T-cell (primary cell): ENCODE measurements at regions of chr7 and their contacts with region 1.

Region 1: GRCh38 chr7:23105644-23106056 is at the start of gene KLHL7:
- DNase-seq: peak; percentile 88 to 97 (median 95)
- ATAC-seq: peak; percentile 93 to 97 (median 96)
- H3K4me3 ChIP-seq: peak within 1 kb of the TSS; percentile 87 to 90
- H3K4me3 Mint-ChIP-seq: peak within 1 kb of the TSS; percentile 97 to 99 (median 97)
- H3K27ac ChIP-seq: peak within 1 kb of the TSS; percentile 89
- H3K27ac Mint-ChIP-seq: peak within 1 kb of the TSS; percentile 92 to 94
- H3K4me1 ChIP-seq: peaks cover 13 to 20% of the 10 kb centered on the region in 2 experiments
- H3K4me1 Mint-ChIP-seq: peaks cover 45 to 48% (median 47%) of the 10 kb centered on the region in 3 donors
- H3K27me3 ChIP-seq: no peaks in the 10 kb centered on the region
- H3K27me3 Mint-ChIP-seq: no peaks in the 10 kb centered on the region
- total RNA-seq, gene KLHL7: 20.1 to 26.8 (median 22.4) TPM

Region 2: DNA sequence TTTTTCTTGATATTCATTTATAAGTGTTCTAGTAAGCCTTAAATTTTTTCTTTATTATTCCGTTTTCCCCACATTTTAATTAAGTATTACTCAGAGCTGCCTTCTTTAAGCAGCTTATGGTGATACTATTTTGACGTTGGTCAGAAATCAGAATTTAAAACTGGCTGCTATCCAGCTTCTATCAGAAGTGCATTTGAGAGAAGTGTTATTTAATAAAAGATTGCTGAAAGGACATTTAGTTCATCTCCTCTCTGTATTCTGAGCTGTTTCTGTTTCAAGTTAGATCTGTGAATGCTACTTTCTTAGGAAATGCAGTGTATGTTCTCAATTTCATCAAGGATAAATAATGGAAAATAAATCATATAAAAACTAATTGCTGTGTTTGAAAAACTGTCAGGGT is 17.4 kb after region 1 on chr7:
- CTCF ChIA-PET with region 1: no interaction called
- POLR2A ChIA-PET with region 1: interaction called in 1 of 2 experiments, 14 read pairs
- DNase-seq: no peak
- ATAC-seq: no peak
- H3K4me3 ChIP-seq: no peak overlapping the region
- H3K4me3 Mint-ChIP-seq: no peak overlapping the region
- H3K27ac ChIP-seq: no peak overlapping the region
- H3K27ac Mint-ChIP-seq: no peak overlapping the region
- H3K4me1 ChIP-seq: no peaks in the 10 kb centered on the region
- H3K4me1 Mint-ChIP-seq: peaks cover 0 to 6% (median 2%) of the 10 kb centered on the region in 3 donors
- H3K27me3 ChIP-seq: no peaks in the 10 kb centered on the region
- H3K27me3 Mint-ChIP-seq: no peaks in the 10 kb centered on the region

Region 3: DNA sequence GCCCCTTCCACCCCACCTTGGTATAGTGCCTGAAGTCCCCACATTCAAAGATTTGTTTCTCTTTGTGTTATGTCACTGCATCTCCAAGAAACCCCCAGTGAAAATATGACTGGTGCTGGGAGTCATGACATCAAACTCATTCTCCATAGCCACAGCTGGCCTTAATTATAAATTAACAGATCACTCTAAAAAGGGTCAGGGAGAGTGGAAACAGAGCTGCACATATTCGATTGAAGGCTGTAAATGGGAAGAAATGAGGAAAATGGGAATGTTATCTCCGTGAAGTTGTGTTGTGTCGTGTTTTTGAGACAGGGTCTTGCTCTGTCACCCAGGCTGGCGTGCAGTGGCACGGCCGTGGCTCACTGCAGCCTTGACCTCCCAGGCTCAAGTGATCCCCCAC is 52.0 kb after region 1 on chr7:
- CTCF ChIA-PET with region 1: no interaction called
- POLR2A ChIA-PET with region 1: no interaction called
- DNase-seq: no peak
- ATAC-seq: no peak
- H3K4me3 ChIP-seq: no peak overlapping the region
- H3K4me3 Mint-ChIP-seq: no peak overlapping the region
- H3K27ac ChIP-seq: no peak overlapping the region
- H3K27ac Mint-ChIP-seq: no peak overlapping the region
- H3K4me1 ChIP-seq: no peaks in the 10 kb centered on the region
- H3K4me1 Mint-ChIP-seq: no peaks in the 10 kb centered on the region
- H3K27me3 ChIP-seq: no peaks in the 10 kb centered on the region
- H3K27me3 Mint-ChIP-seq: no peaks in the 10 kb centered on the region

Region 4: GRCh38 chr7:23181684-23182553 is 76.3 kb after region 1 on chr7 and contains the start of gene NUP42:
- CTCF ChIA-PET with region 1: interaction called in 1 of 2 experiments, 11 read pairs
- POLR2A ChIA-PET with region 1: interaction called, 5 read pairs
- DNase-seq: peak; percentile 87 to 97 (median 92)
- ATAC-seq: peak; percentile 94 to 97 (median 96)
- H3K4me3 ChIP-seq: peak within 1 kb of the TSS; percentile 72 to 74
- H3K4me3 Mint-ChIP-seq: peak within 1 kb of the TSS; percentile 93 to 98 (median 95)
- H3K27ac ChIP-seq: peak within 1 kb of the TSS; percentile 83
- H3K27ac Mint-ChIP-seq: peak within 1 kb of the TSS; percentile 97
- H3K4me1 ChIP-seq: peaks cover 14 to 20% of the 10 kb centered on the region in 2 experiments
- H3K4me1 Mint-ChIP-seq: peaks cover 37 to 50% (median 40%) of the 10 kb centered on the region in 3 donors
- H3K27me3 ChIP-seq: no peaks in the 10 kb centered on the region
- H3K27me3 Mint-ChIP-seq: no peaks in the 10 kb centered on the region
- total RNA-seq, gene NUP42: 17.5 to 38.9 (median 31.9) TPM